Activated CD4-positive, alpha-beta T cell treated with anti-CD3 and anti-CD28 coated beads, Interleukin-2, amount 10 ng/mL, durations not matched to agents 7 days and 5 days (primary cell): ENCODE measurements at regions of chr6 and their contacts with region 1.

Region 1: DNA sequence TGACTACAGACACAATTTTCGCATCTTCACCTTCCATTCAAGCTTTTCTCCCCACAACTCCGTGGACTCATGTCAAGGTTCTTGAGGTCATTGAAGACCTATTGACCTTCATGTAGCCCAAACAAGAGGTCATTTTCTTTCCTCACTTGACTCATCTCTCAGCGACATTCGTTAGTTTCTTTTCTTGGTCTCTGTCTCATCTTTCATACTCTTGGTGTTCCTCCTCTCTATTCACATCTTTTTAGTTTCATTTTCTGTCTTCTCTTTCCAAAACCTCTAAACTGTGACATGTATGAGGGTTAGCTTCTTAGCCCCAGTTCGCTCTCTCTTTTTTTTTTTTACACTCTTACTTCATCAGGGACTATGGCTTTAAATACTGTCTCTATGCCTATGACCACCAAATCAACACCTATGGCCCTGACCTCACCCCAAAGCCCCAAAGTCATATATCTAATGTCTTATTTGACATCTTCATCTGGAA is 128.6 kb upstream of the BACH2 start:
- DNase-seq: no peak
- H3K4me3 Mint-ChIP-seq: peak overlapping the region; percentile 65
- H3K27ac Mint-ChIP-seq: peak overlapping the region; percentile 97
- H3K4me1 Mint-ChIP-seq: peaks cover 24% of the 10 kb centered on the region
- H3K27me3 Mint-ChIP-seq: no peaks in the 10 kb centered on the region

Region 2: GRCh38 chr6:90256698-90257485 is 168.3 kb before region 1 on chr6:
- CTCF ChIA-PET with region 1: no interaction called
- POLR2A ChIA-PET with region 1: no interaction called
- DNase-seq: peak; percentile 56
- H3K4me3 Mint-ChIP-seq: no peak overlapping the region
- H3K27ac Mint-ChIP-seq: peak overlapping the region; percentile 42
- H3K4me1 Mint-ChIP-seq: peaks cover 84% of the 10 kb centered on the region
- H3K27me3 Mint-ChIP-seq: no peaks in the 10 kb centered on the region

Region 3: DNA sequence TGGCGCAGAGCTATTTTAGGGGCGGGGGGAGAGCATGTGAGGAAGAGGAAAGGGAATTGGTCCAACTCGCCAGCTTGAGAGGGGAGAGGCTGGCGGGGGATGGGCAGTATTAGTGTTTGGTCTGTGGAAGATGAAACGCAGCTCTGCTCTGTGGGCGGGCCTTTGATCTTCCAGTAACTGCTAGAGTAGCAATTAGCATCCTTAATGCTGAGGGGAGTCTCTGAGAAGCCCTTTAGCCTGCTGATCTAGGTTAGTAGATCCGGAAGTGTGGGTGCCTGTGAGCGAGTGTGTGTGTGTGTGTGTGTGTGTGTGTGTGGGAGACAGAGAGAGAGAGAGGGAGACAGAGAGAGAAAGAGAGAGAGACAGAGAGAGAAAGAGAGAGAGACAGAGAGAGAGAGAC is 11.3 kb before region 1 on chr6:
- CTCF ChIA-PET with region 1: interaction called, 64 read pairs
- POLR2A ChIA-PET with region 1: interaction called, 5 read pairs
- DNase-seq: peak; percentile 79
- H3K4me3 Mint-ChIP-seq: peak overlapping the region; percentile 65
- H3K27ac Mint-ChIP-seq: peak overlapping the region; percentile 92
- H3K4me1 Mint-ChIP-seq: peaks cover 70% of the 10 kb centered on the region
- H3K27me3 Mint-ChIP-seq: peaks cover 2% of the 10 kb centered on the region

Region 4: DNA sequence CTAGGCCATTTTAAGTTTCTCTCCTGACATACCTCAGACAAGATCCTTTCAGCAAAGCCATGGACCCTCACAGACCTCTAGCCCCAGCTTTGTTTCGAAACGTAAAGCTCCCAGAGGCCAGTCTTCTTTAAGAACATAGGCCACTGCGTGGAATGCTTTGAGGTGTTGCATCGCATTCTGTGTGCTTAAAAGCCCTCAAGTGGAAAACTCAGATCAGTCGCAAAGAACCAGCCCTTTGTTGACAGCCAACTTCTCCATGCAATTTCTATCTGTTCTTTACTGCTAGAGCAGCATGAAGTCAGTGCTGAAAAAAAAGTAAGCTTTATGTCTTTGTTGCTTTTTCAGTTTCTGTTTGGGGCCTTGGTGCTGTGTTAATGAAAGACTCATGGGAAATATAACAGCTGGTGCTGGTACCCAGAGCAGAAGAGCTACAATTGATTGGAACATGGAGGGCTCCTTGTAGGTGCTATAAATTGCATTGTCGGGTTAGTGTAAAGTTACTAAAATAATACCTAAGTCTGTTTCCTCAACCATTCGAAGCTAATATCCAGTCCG is 19.0 kb after region 1 on chr6:
- CTCF ChIA-PET with region 1: interaction called, 20 read pairs
- POLR2A ChIA-PET with region 1: interaction called, 4 read pairs
- DNase-seq: no peak
- H3K4me3 Mint-ChIP-seq: no peak overlapping the region
- H3K27ac Mint-ChIP-seq: peak overlapping the region; percentile 39
- H3K4me1 Mint-ChIP-seq: peaks cover 27% of the 10 kb centered on the region
- H3K27me3 Mint-ChIP-seq: no peaks in the 10 kb centered on the region